Stomach (tissue), 19 donors: ENCODE measurements at regions of chr3 and their contacts with region 1.

Region 1: GRCh38 chr3:17645072-17645698 is 97.2 kb downstream of the TBC1D5 start:
- DNase-seq: peak in 1 of 2 donors; percentile 80
- H3K4me3 ChIP-seq: no peak overlapping the region
- H3K27ac ChIP-seq: no peak overlapping the region
- H3K4me1 ChIP-seq: peaks cover 0 to 23% (median 11%) of the 10 kb centered on the region in 4 donors
- H3K27me3 ChIP-seq: no peaks in the 10 kb centered on the region
- CTCF ChIP-seq: peak in 5 of 7 experiments; percentile 54 to 67 (median 61)
- EP300 ChIP-seq: no peak
- POLR2A ChIP-seq: no peak

Region 2: GRCh38 chr3:17831366-17831765 is 186.2 kb after region 1 on chr3:
- intact Hi-C with region 1: loop called (anchors 10 kb)
- DNase-seq: no peak
- H3K4me3 ChIP-seq: no peak overlapping the region
- H3K27ac ChIP-seq: no peak overlapping the region
- H3K4me1 ChIP-seq: no peaks in the 10 kb centered on the region
- H3K27me3 ChIP-seq: no peaks in the 10 kb centered on the region
- CTCF ChIP-seq: no peak
- EP300 ChIP-seq: no peak
- POLR2A ChIP-seq: no peak